ENCODE measurements at regions of chr14 and their contacts with region 1.

Region 1: GRCh38 chr14:100850841-100851585 is 25.1 kb downstream of the MEG3 start:
- DNase-seq: peak; percentile 95
- H3K4me3 ChIP-seq: no peak overlapping the region
- H3K27ac ChIP-seq: no peak overlapping the region
- H3K4me1 ChIP-seq: peaks cover 0 to 33% (median 12%) of the 10 kb centered on the region in 6 donors
- H3K27me3 ChIP-seq: no peaks in the 10 kb centered on the region
- CTCF ChIP-seq: peak; percentile 51 to 89 (median 80)
- POLR2A ChIP-seq: no peak

Region 2: GRCh38 chr14:100504372-100505078 is 346.5 kb before region 1 on chr14:
- intact Hi-C with region 1: no loop called
- DNase-seq: no peak
- H3K4me3 ChIP-seq: no peak overlapping the region
- H3K27ac ChIP-seq: no peak overlapping the region
- H3K4me1 ChIP-seq: no peaks in the 10 kb centered on the region
- H3K27me3 ChIP-seq: no peaks in the 10 kb centered on the region
- CTCF ChIP-seq: no peak
- POLR2A ChIP-seq: no peak

Region 3: DNA sequence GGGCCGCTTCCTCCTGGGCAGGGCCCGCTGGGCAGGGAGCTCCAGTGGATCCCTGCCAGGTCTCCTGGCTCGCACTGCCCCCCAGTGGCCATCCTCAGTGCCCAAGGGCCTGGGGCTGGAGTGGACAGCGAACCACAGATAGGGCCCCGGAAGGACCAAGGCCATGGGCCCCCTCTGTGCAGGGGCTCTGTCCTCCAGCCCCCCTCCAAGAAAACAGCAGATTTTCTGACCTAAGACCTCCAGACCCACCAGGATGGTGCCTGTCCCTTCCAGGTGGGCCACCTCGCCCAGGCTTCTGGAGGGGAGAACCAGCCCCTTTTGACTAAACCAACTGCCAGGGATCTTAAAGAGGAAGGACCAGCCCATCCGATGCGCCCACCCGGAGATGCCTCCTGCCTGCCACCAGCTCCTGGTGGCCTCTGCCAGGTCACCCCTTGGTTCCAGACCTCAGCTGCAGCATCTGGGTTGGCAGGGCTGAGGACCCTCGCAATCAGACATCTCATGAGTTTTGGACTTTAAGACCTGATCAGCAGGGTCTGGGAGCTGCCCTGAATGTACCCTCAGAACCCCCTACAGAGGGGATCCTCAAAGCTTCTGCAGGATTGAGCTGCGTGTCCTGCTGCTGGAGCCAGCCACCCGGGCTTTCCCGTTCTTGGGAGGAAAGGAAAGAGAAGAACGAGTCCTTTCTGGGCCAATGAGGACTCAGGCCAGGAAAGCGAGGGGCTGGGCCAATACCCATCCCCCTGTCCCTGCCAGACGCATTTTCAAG is 384.5 kb after region 1 on chr14:
- intact Hi-C with region 1: loop called (anchors 10 kb)
- DNase-seq: no peak
- H3K4me3 ChIP-seq: no peak overlapping the region
- H3K27ac ChIP-seq: no peak overlapping the region
- H3K4me1 ChIP-seq: peaks cover 0 to 7% (median 3%) of the 10 kb centered on the region in 6 donors
- H3K27me3 ChIP-seq: peaks cover 0 to 38% (median 0%) of the 10 kb centered on the region in 7 donors
- CTCF ChIP-seq: peak in 10 of 11 experiments; percentile 35 to 82 (median 66)
- POLR2A ChIP-seq: no peak

Region 4: DNA sequence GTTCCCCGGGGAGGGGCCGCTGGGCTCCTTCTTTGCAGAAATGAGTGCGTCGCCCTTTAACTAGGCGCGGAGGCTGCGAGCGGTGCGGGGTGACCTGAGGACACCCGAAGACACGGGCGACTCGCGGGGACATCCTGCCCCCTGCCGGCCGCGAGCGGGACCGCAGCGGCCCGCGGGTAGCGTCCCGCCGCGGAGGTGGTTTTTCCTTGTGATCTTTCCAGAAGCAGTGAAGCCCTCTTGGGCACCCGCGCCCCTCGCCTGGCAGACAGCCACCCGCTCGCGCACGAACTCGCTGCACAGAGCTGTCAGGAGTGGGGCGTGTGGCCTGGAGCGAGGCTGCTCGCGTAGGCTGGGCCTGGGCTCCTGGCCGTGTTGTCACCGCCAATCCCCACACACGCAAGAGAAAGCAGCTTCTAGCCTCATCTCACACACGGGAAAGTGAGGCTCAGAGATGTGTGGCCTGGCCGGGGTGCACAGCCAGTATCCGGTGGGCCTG is 777.5 kb after region 1 on chr14:
- intact Hi-C with region 1: loop called (anchors 5 kb)
- DNase-seq: peak; percentile 92
- H3K4me3 ChIP-seq: peak overlapping the region in 1 of 8 donors; percentile 45
- H3K27ac ChIP-seq: no peak overlapping the region
- H3K4me1 ChIP-seq: peaks cover 8 to 15% (median 13%) of the 10 kb centered on the region in 6 donors
- H3K27me3 ChIP-seq: peaks cover 0 to 15% (median 0%) of the 10 kb centered on the region in 7 donors
- CTCF ChIP-seq: peak; percentile 94 to 100 (median 99)
- POLR2A ChIP-seq: no peak

Measured in spleen (tissue), 13 donors.